ENCODE measurements at regions of chr3 and their contacts with region 1.

Region 1: DNA sequence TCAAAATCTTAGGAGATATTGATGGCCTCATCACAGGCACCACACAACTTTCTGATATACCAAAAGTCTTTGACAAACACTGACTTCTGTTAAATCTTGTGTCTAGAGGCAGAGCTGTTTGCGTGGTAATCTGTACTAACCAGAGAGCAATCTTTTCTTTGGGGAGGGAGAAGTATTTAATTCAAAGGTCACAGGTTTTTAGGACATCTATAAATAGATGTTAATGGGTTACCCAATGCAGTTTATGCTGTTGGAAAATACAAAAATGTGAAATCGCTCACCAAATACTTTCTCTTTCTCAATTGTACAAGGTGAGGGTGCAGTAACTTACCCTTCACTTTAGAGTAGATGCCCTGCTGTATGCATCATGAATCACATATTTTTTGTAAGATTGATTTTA is 510.5 kb downstream of the NSUN3 start:
- DNase-seq: no peak
- H3K4me3 ChIP-seq: no peak overlapping the region
- H3K27ac ChIP-seq: no peak overlapping the region
- H3K4me1 ChIP-seq: no peaks in the 10 kb centered on the region
- H3K27me3 ChIP-seq: no peaks in the 10 kb centered on the region
- CTCF ChIP-seq: no peak

Region 2: GRCh38 chr3:94544131-94544655 is 29.1 kb before region 1 on chr3:
- CTCF ChIA-PET with region 1: no interaction called
- POLR2A ChIA-PET with region 1: no interaction called
- intact Hi-C with region 1: loop called (anchors 1 kb)
- DNase-seq: no peak
- H3K4me3 ChIP-seq: no peak overlapping the region
- H3K27ac ChIP-seq: no peak overlapping the region
- H3K4me1 ChIP-seq: no peaks in the 10 kb centered on the region
- H3K27me3 ChIP-seq: no peaks in the 10 kb centered on the region
- CTCF ChIP-seq: no peak